ENCODE measurements at regions of chr1 and their contacts with region 1.

Region 1: DNA sequence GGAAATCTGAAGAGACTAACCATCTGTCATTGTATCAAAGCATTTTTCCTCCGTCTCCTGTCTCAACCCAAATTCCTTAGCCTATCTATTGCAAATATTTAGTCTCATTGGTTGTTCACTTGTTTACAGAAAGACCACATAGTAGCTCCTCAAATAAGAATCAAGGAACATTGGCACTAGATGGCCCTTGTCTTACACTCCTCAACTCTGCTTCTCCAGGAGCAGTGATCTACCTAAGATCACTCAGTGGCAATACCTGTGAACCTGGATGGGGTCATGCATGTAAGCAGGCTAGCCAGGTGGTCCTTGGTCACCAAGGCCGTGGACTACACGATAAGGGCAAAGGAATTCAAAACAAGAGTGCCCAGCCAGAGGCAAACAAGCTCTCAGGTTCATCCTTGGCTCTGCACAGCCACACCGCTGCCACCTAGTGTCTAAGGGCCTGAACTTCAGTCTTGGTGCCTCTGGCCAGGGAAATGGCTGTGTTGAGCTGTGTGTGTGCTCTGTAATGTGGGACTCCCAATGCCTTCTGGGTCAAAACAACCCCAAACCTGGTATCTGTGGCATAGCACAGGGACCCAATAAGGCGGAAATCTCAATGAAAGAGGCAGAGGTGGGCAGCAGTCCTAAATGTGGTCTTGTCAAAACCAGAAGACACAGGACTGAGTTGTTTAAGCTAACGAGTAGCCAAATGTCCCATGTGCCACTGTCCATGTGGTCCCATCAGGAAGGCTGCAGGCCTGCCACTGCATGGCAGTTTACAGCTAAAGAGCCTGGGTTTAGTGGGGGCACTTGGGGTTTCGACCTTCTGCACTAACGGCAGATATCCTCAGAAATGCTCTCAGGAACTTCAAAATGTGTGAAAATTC is 54.5 kb downstream of the GPR161 start:
- DNase-seq: no peak
- H3K4me3 ChIP-seq: no peak overlapping the region
- H3K27ac ChIP-seq: no peak overlapping the region
- H3K27me3 ChIP-seq: no peaks in the 10 kb centered on the region
- CTCF ChIP-seq: peak; percentile 98

Region 2: DNA sequence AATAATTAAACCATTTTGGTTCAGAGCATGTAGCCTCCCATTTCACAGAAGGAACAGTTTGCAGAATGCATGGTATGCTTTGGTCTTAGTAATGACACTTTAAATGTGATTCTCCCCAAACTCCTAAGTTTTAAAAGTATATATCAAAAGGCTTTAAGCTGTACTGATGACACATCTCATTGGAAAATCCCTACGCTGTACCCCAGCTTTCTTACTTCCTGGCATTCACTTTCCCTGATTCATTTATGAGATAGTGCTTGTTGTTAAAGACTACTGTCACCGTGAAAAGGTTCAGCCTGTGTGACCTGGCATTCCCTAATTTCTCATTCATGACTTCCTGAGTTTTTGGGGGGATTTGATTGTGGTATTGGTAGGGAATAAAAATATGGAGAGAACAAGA is 307.1 kb before region 1 on chr1:
- CTCF ChIA-PET with region 1: no interaction called
- POLR2A ChIA-PET with region 1: no interaction called
- DNase-seq: no peak
- H3K4me3 ChIP-seq: no peak overlapping the region
- H3K27ac ChIP-seq: no peak overlapping the region
- H3K27me3 ChIP-seq: no peaks in the 10 kb centered on the region
- CTCF ChIP-seq: no peak

Region 3: DNA sequence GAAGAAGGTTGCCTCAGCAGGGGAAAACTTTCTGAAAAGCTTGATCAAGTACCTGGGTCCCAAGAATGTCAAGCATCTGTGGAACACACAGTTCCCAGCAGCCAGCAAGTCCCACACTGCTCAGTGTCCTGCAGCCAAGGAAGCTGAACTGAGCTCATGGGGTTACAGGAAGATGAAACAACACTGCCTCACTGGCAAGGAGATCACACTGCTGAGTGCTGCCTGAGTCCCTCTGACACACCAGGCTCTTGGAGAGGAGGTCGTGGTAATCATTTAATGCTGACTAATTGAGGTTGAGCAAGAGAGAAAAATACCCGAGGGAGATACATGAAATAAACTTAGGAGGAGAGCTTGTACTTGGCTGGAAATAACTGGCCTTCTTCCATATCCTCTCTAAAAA is 285.2 kb before region 1 on chr1:
- CTCF ChIA-PET with region 1: interaction called, 14 read pairs
- POLR2A ChIA-PET with region 1: no interaction called
- DNase-seq: peak; percentile 93
- H3K4me3 ChIP-seq: no peak overlapping the region
- H3K27ac ChIP-seq: peak overlapping the region; percentile 86
- H3K27me3 ChIP-seq: no peaks in the 10 kb centered on the region
- CTCF ChIP-seq: no peak

Region 4: GRCh38 chr1:168054117-168054516 is 28.1 kb before region 1 on chr1:
- CTCF ChIA-PET with region 1: interaction called, 30 read pairs
- POLR2A ChIA-PET with region 1: no interaction called
- DNase-seq: no peak
- H3K4me3 ChIP-seq: no peak overlapping the region
- H3K27ac ChIP-seq: no peak overlapping the region
- H3K27me3 ChIP-seq: no peaks in the 10 kb centered on the region
- CTCF ChIP-seq: no peak

Region 5: GRCh38 chr1:168100315-168101002 is 18.2 kb after region 1 on chr1:
- CTCF ChIA-PET with region 1: interaction called, 46 read pairs
- POLR2A ChIA-PET with region 1: interaction called, 4 read pairs
- DNase-seq: no peak
- H3K4me3 ChIP-seq: no peak overlapping the region
- H3K27ac ChIP-seq: no peak overlapping the region
- H3K27me3 ChIP-seq: no peaks in the 10 kb centered on the region
- CTCF ChIP-seq: no peak

Region 6: DNA sequence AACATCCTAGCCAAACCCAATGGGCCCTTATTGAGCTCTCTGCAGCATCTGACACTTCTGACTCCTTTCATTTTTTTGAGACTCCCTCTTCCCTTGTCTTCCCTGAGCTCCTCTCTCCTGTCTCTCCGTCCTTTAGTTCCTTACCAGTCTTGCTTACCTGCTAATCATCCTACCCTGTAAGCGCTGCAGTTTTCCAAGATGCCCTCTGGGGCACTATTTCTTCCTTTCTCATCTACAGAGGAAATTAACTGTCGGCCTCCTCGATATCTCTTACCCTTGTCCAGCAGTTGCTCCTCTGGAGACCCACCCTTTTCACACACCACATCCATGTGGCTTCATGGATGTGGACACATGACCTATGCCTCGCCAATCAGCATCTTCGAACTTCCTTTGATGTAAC is 47.7 kb after region 1 on chr1:
- CTCF ChIA-PET with region 1: interaction called, 17 read pairs
- POLR2A ChIA-PET with region 1: no interaction called
- DNase-seq: no peak
- H3K4me3 ChIP-seq: no peak overlapping the region
- H3K27ac ChIP-seq: no peak overlapping the region
- H3K27me3 ChIP-seq: no peaks in the 10 kb centered on the region
- CTCF ChIP-seq: no peak

Region 7: DNA sequence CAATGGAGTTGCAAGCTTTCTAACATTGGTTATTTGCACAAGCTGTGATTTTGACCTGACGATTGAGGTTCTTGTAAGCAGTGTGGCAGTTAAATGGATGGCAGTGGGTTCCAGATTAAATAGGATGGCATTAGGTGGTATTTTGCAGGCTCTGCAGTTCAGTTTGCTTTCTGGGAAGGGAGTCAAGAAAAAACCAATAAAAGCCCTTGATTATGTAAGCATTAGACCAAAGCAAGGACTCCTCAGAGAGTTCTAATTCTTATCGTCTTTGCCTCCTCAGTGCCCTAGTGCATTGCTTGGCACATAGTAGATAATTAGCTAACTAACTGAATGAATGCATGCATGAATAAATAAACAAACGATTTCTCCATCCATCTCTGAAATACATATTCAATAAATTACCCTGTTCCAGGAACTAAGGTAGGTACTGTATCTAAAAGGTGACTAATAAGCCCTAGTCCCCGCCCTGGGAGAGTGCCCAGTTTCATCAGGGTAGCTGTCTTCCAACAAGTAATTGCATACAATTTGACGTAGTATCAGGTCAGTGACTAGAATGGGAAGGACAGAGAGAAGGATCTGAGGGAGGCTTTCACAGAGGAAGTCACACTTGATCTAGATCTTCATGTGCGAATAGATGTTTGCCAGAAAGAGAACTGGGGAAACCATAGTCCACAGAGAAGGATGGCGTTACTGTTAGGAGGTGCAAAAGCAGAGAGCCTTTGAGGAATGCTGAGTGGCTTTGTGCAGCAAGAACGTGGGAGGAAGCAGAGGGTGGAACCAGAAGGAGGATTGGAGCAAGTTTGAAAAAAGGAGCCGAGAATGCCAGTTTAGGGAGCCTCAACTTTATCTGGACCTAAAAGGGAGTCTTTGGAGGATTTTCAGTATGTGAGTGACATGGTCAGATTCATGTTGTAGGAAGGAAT is 309.8 kb after region 1 on chr1:
- CTCF ChIA-PET with region 1: no interaction called
- POLR2A ChIA-PET with region 1: no interaction called
- DNase-seq: no peak
- H3K4me3 ChIP-seq: no peak overlapping the region
- H3K27ac ChIP-seq: no peak overlapping the region
- H3K27me3 ChIP-seq: peaks cover 5% of the 10 kb centered on the region
- CTCF ChIP-seq: no peak

Measured in AG04450 (cell line).